IMR-90 (cell line): ENCODE measurements at regions of chr20 and their contacts with region 1.

Region 1: DNA sequence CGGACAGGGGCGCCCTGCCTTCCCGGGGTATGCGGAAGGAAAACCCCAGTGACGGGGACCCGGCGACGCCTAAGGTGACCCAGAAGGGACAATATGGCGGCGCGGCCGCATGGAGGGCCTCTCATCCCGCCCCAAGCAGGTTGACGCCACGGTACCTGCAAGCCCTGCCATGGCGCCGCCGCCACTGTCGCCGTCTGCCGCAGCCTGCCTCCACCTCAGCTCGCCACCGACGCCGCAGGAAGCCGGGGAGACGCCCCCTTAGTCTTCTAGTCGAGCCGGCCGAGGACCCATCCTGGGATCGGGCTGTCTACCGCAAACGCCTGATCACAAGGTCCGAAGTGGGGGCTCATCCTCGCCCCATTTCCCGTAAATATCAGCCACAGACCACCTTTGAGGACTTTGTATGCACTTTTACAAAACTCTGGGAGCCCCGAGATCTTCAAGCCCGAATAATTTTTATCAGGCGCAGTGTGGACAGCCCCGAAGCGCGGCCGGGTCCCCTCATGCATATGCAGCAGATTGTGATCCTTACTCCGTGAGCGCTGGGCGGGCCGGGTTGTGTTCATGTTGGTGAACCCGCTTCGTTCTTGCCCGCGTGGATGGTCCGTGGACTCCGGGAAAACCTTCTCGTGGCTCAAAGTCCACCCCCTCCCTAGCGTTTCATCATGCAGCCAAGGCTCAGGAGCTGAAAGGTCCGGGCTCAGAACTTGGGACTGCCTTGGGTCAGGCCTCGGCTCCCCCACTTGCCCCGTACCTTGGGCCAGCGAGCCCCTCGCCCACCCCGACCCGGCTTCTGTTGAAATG is at the start of gene BLCAP:
- DNase-seq: peak; percentile 78
- ATAC-seq: peak; percentile 91
- H3K4me3 ChIP-seq: peak within 1 kb of the TSS; percentile 80
- H3K27ac ChIP-seq: peak within 1 kb of the TSS; percentile 87
- H3K4me1 ChIP-seq: peaks cover 11% of the 10 kb centered on the region
- H3K27me3 ChIP-seq: no peaks in the 10 kb centered on the region
- CTCF ChIP-seq: no peak
- POLR2A ChIP-seq: peak; percentile 72
- RAD21 ChIP-seq: no peak
- total RNA-seq, gene BLCAP: 17.7 and 23.3 TPM in 2 replicates

Region 2: DNA sequence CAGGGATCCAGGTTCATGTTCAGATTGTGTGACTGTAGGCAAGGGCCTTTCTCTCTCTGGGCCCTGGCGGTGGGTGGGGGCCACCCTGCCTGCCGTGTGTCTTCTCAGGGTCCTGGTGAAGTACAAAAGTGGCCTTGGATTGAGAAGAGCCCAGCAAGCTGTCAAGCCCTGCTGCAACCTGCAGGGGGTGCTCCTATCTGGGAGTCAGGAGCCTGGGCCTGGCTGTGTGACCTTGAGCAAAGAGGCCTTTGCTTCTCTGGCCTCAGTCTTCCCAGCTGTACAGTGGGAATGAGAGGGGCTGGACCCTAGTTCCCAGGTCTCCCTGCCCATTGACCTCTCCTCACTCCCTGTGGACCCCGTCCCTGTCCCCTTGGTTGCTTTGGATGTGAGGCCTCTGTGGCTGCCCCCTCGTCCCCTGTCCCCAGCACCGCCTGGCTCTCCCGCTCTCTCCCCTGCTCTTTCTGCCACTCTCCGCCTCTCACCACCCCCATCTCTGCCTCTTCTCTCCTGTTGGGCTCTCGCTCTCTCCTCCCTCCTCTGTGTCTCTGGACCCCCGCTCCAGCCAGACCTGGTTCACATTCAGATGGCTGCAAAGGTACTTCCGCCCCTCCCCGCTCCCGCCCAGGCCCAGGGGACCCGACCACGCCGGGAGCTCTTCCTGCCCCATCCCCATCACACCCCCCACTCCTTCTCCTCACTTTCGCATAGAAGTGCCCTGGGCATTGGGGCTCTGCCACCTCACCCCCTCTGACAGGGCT is 135.2 kb before region 1 on chr20:
- CTCF ChIA-PET with region 1: no interaction called
- POLR2A ChIA-PET with region 1: no interaction called
- dilution Hi-C with region 1: no loop called
- in situ Hi-C with region 1: loop called (anchors 5 kb)
- intact Hi-C with region 1: no loop called
- DNase-seq: no peak
- ATAC-seq: peak; percentile 45; the same call in 1 of the 2 replicates
- H3K4me3 ChIP-seq: no peak overlapping the region
- H3K27ac ChIP-seq: no peak overlapping the region
- H3K4me1 ChIP-seq: no peaks in the 10 kb centered on the region
- H3K27me3 ChIP-seq: no peaks in the 10 kb centered on the region
- CTCF ChIP-seq: peak; percentile 39; the same call in 1 of the 2 replicates
- POLR2A ChIP-seq: no peak
- RAD21 ChIP-seq: peak; percentile 41

Region 3: GRCh38 chr20:37697314-37697713 is 169.5 kb after region 1 on chr20:
- CTCF ChIA-PET with region 1: no interaction called
- POLR2A ChIA-PET with region 1: no interaction called
- dilution Hi-C with region 1: no loop called
- in situ Hi-C with region 1: no loop called
- intact Hi-C with region 1: no loop called
- DNase-seq: no peak
- ATAC-seq: no peak
- H3K4me3 ChIP-seq: no peak overlapping the region
- H3K27ac ChIP-seq: no peak overlapping the region
- H3K4me1 ChIP-seq: peaks cover 2% of the 10 kb centered on the region; the same call in 1 of the 2 replicates
- H3K27me3 ChIP-seq: no peaks in the 10 kb centered on the region
- CTCF ChIP-seq: no peak
- POLR2A ChIP-seq: no peak
- RAD21 ChIP-seq: no peak